ENCODE measurements at regions of chr22 and their contacts with region 1.

Region 1: GRCh38 chr22:30005213-30005857 is 74.9 kb upstream of the HORMAD2 start:
- DNase-seq: peak; percentile 50
- ATAC-seq: peak; percentile 69
- H3K4me3 Mint-ChIP-seq: no peak overlapping the region
- H3K27ac Mint-ChIP-seq: no peak overlapping the region
- H3K4me1 Mint-ChIP-seq: no peaks in the 10 kb centered on the region
- H3K27me3 Mint-ChIP-seq: no peaks in the 10 kb centered on the region
- CTCF ChIP-seq: peak; percentile 98

Region 2: GRCh38 chr22:29625090-29625825 is 380.1 kb before region 1 on chr22:
- CTCF ChIA-PET with region 1: interaction called, 22 read pairs
- POLR2A ChIA-PET with region 1: no interaction called
- intact Hi-C with region 1: no loop called
- DNase-seq: no peak
- ATAC-seq: peak; percentile 50
- H3K4me3 Mint-ChIP-seq: no peak overlapping the region
- H3K27ac Mint-ChIP-seq: no peak overlapping the region
- H3K4me1 Mint-ChIP-seq: peaks cover 46% of the 10 kb centered on the region
- H3K27me3 Mint-ChIP-seq: no peaks in the 10 kb centered on the region
- CTCF ChIP-seq: peak; percentile 97

Region 3: GRCh38 chr22:29689880-29690213 is 315.5 kb before region 1 on chr22:
- CTCF ChIA-PET with region 1: interaction called, 43 read pairs
- POLR2A ChIA-PET with region 1: no interaction called
- intact Hi-C with region 1: loop called (anchors 1 kb)
- DNase-seq: no peak
- ATAC-seq: no peak
- H3K4me3 Mint-ChIP-seq: no peak overlapping the region
- H3K27ac Mint-ChIP-seq: no peak overlapping the region
- H3K4me1 Mint-ChIP-seq: no peaks in the 10 kb centered on the region
- H3K27me3 Mint-ChIP-seq: no peaks in the 10 kb centered on the region
- CTCF ChIP-seq: no peak

Region 4: GRCh38 chr22:29813563-29813962 is 191.8 kb before region 1 on chr22:
- CTCF ChIA-PET with region 1: no interaction called
- POLR2A ChIA-PET with region 1: no interaction called
- intact Hi-C with region 1: loop called (anchors 5 kb)
- DNase-seq: no peak
- ATAC-seq: no peak
- H3K4me3 Mint-ChIP-seq: no peak overlapping the region
- H3K27ac Mint-ChIP-seq: no peak overlapping the region
- H3K4me1 Mint-ChIP-seq: no peaks in the 10 kb centered on the region
- H3K27me3 Mint-ChIP-seq: no peaks in the 10 kb centered on the region
- CTCF ChIP-seq: no peak

Region 5: GRCh38 chr22:29883045-29883774 is 122.1 kb before region 1 on chr22 and contains the start of gene MTMR3:
- CTCF ChIA-PET with region 1: interaction called, 4 read pairs
- POLR2A ChIA-PET with region 1: no interaction called
- intact Hi-C with region 1: loop called (anchors 5 kb)
- DNase-seq: peak; percentile 98
- ATAC-seq: peak; percentile 82
- H3K4me3 Mint-ChIP-seq: peak within 1 kb of the TSS; percentile 92
- H3K27ac Mint-ChIP-seq: peak within 1 kb of the TSS; percentile 83
- H3K4me1 Mint-ChIP-seq: peaks cover 10% of the 10 kb centered on the region
- H3K27me3 Mint-ChIP-seq: peaks cover 3% of the 10 kb centered on the region
- CTCF ChIP-seq: no peak
- total RNA-seq, gene MTMR3: 34.8 and 36.6 TPM in 2 replicates

Region 6: GRCh38 chr22:30015846-30016245 is 10.5 kb after region 1 on chr22:
- CTCF ChIA-PET with region 1: interaction called, 16 read pairs
- POLR2A ChIA-PET with region 1: no interaction called
- intact Hi-C with region 1: no loop called
- DNase-seq: no peak
- ATAC-seq: no peak
- H3K4me3 Mint-ChIP-seq: no peak overlapping the region
- H3K27ac Mint-ChIP-seq: peak overlapping the region; percentile 22
- H3K4me1 Mint-ChIP-seq: no peaks in the 10 kb centered on the region
- H3K27me3 Mint-ChIP-seq: no peaks in the 10 kb centered on the region
- CTCF ChIP-seq: no peak

Region 7: GRCh38 chr22:30159561-30160353 is 154.4 kb after region 1 on chr22:
- CTCF ChIA-PET with region 1: no interaction called
- POLR2A ChIA-PET with region 1: no interaction called
- intact Hi-C with region 1: no loop called
- DNase-seq: no peak
- ATAC-seq: no peak
- H3K4me3 Mint-ChIP-seq: no peak overlapping the region
- H3K27ac Mint-ChIP-seq: no peak overlapping the region
- H3K4me1 Mint-ChIP-seq: no peaks in the 10 kb centered on the region
- H3K27me3 Mint-ChIP-seq: peaks cover 14% of the 10 kb centered on the region
- CTCF ChIP-seq: no peak

Region 8: DNA sequence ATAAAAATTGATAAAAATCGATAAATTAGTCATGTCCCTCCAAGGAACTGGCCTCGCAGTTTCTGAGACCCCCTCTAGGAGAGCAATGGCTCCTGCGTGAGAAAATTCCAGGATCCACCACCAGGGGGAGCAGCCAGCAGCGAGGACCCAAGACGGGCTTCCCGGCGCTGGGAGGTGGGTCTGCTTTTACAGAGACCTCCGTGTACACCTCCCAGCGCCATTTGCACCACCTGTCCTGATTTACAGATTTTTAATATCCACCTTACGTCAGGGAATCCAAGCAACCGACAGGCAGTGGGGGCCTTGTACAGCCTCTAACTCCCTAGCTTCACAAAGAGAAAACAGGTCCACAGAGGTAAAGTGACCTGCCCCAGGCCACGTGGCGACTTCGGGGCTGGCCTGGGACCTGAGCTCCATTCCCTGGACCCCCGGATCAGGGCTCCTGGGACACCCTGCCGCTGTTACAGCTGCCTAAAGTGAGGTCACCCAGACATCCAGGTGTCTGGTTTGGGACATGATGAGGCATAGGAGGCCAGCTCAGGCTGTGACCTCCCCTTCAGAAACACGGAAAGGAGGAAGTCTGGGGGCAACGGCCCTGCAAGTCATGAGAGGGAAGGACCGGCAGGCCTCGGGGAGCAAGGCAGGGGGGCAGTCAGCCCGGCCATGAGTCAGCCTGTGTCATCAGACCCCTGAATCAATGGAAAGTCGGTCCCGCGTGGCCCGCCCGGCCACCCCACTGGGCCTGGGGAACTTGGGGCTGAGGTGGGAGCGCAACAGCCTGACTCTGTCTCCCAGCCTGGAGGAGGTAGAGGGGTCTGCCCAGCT is 257.8 kb after region 1 on chr22:
- CTCF ChIA-PET with region 1: no interaction called
- POLR2A ChIA-PET with region 1: no interaction called
- intact Hi-C with region 1: no loop called
- DNase-seq: peak; percentile 72
- ATAC-seq: peak; percentile 13
- H3K4me3 Mint-ChIP-seq: peak overlapping the region; percentile 59
- H3K27ac Mint-ChIP-seq: peak overlapping the region; percentile 18
- H3K4me1 Mint-ChIP-seq: peaks cover 27% of the 10 kb centered on the region
- H3K27me3 Mint-ChIP-seq: no peaks in the 10 kb centered on the region
- CTCF ChIP-seq: peak; percentile 97